ENCODE measurements at regions of chr21 and their contacts with region 1.

Region 1: GRCh38 chr21:25428537-25428936 is 178.7 kb downstream of the MRPL39 start:
- DNase-seq: peak in 1 of 9 experiments; percentile 15
- ATAC-seq: no peak
- H3K4me3 ChIP-seq: no peak overlapping the region
- H3K4me3 Mint-ChIP-seq: no peak overlapping the region
- H3K27ac ChIP-seq: no peak overlapping the region
- H3K27ac Mint-ChIP-seq: no peak overlapping the region
- H3K4me1 ChIP-seq: no peaks in the 10 kb centered on the region
- H3K4me1 Mint-ChIP-seq: peaks cover 5% of the 10 kb centered on the region
- H3K27me3 ChIP-seq: no peaks in the 10 kb centered on the region
- H3K27me3 Mint-ChIP-seq: peaks cover 4% of the 10 kb centered on the region
- CTCF ChIP-seq: no peak

Region 2: GRCh38 chr21:25329227-25329825 is 99.2 kb before region 1 on chr21:
- CTCF ChIA-PET with region 1: no interaction called
- POLR2A ChIA-PET with region 1: no interaction called
- intact Hi-C with region 1: no loop called
- DNase-seq: no peak
- ATAC-seq: no peak
- H3K4me3 ChIP-seq: no peak overlapping the region
- H3K4me3 Mint-ChIP-seq: no peak overlapping the region
- H3K27ac ChIP-seq: no peak overlapping the region
- H3K27ac Mint-ChIP-seq: no peak overlapping the region
- H3K4me1 ChIP-seq: no peaks in the 10 kb centered on the region
- H3K4me1 Mint-ChIP-seq: no peaks in the 10 kb centered on the region
- H3K27me3 ChIP-seq: no peaks in the 10 kb centered on the region
- H3K27me3 Mint-ChIP-seq: no peaks in the 10 kb centered on the region
- CTCF ChIP-seq: no peak

Region 3: DNA sequence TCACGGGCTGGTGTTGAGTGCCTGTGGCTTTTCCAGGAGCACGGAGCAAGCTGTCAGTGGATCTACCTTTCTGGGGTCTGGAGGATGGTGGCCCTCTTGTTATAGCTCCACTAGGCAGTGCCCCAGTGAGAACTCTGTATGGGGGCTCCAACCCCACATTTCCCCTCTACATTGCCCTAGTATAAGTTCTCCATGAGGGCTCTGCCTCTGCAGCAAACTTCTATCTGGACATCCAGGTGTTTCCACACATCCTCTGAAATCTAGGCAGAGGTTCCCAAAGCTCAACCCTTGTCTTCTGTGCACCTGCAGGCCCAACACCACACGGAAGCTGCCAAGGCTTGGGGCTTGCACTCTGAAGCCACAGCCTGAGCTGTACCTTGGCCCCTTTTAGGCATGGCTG is 21.4 kb after region 1 on chr21:
- CTCF ChIA-PET with region 1: no interaction called
- POLR2A ChIA-PET with region 1: no interaction called
- intact Hi-C with region 1: no loop called
- DNase-seq: no peak
- ATAC-seq: no peak
- H3K4me3 ChIP-seq: no peak overlapping the region
- H3K4me3 Mint-ChIP-seq: no peak overlapping the region
- H3K27ac ChIP-seq: no peak overlapping the region
- H3K27ac Mint-ChIP-seq: no peak overlapping the region
- H3K4me1 ChIP-seq: no peaks in the 10 kb centered on the region
- H3K4me1 Mint-ChIP-seq: no peaks in the 10 kb centered on the region
- H3K27me3 ChIP-seq: no peaks in the 10 kb centered on the region
- H3K27me3 Mint-ChIP-seq: no peaks in the 10 kb centered on the region
- CTCF ChIP-seq: no peak

Region 4: DNA sequence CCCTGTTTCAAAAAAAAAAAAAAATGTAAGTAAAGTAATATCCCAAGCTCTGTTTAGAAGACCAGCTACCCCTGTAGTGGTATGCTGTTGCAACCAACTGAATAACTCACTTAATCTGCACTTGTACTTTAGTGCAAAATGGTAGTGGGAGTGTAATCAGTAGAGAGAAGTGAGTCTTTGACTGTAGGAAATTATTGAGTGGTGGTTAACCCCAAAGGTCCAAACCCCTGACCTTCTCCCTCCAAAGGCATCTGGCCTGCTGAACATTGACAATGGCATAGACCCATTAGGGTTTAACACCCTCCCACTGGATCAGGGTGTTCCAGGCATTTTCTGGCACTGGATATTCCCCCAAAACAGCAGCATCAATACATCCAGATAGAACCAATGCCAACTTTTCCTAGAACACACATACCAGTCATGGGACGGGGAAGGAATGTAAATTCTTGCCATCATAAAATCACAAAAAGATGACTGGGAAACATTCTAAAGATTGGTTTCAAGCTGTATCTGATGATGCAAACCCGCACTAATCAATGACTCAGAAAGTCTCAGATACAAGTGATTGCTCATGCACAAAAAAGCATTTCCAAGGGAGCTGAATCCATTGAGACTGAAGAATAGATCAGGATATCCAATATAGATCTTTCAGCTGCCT is 68.4 kb after region 1 on chr21:
- CTCF ChIA-PET with region 1: no interaction called
- POLR2A ChIA-PET with region 1: no interaction called
- intact Hi-C with region 1: loop called in 1 of 2 experiments (anchors 10 kb)
- DNase-seq: no peak
- ATAC-seq: no peak
- H3K4me3 ChIP-seq: no peak overlapping the region
- H3K4me3 Mint-ChIP-seq: no peak overlapping the region
- H3K27ac ChIP-seq: no peak overlapping the region
- H3K27ac Mint-ChIP-seq: no peak overlapping the region
- H3K4me1 ChIP-seq: no peaks in the 10 kb centered on the region
- H3K4me1 Mint-ChIP-seq: peaks cover 3% of the 10 kb centered on the region
- H3K27me3 ChIP-seq: no peaks in the 10 kb centered on the region
- H3K27me3 Mint-ChIP-seq: no peaks in the 10 kb centered on the region
- CTCF ChIP-seq: no peak

Region 5: DNA sequence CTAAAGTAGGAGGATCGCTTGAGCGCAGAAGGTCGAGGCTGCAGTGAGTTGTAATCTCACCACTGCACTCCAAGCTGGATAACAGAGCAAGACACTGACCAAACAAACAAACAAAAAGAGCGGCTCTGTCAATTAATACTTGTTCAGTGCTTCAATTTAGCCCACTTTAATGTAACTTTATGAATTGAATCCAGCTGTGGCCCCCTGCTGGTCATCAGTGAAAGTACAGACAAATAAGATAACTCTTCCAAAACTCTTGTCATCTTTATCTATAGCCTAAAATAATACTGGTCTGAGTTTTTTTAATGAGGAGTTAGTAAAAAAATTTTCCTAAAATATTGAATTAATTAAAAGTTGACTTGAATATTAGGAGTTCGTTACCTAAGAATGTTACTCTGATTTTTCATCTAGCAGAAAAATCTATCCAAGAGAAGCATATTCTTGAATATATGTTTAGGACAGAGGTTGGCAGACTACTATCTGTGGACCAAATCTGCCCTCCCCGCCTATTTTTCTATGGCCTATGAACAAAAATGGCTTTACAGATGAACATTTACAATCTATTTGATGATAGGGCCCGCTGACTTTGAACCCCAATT is 280.0 kb after region 1 on chr21:
- CTCF ChIA-PET with region 1: no interaction called
- POLR2A ChIA-PET with region 1: no interaction called
- intact Hi-C with region 1: loop called in 1 of 2 experiments (anchors 2 kb)
- DNase-seq: peak in 8 of 9 experiments; percentile 15 to 71 (median 54)
- ATAC-seq: peak; percentile 68
- H3K4me3 ChIP-seq: no peak overlapping the region
- H3K4me3 Mint-ChIP-seq: no peak overlapping the region
- H3K27ac ChIP-seq: no peak overlapping the region
- H3K27ac Mint-ChIP-seq: no peak overlapping the region
- H3K4me1 ChIP-seq: no peaks in the 10 kb centered on the region
- H3K4me1 Mint-ChIP-seq: no peaks in the 10 kb centered on the region
- H3K27me3 ChIP-seq: no peaks in the 10 kb centered on the region
- H3K27me3 Mint-ChIP-seq: no peaks in the 10 kb centered on the region
- CTCF ChIP-seq: peak; percentile 90